Astrocyte of the cerebellum (primary cell): ENCODE measurements at regions of chr15 and their contacts with region 1.

Region 1: GRCh38 chr15:34099914-34100313 is 1.7 kb downstream of the EMC7 start:
- DNase-seq: no peak
- H3K4me3 ChIP-seq: no peak overlapping the region
- CTCF ChIP-seq: no peak

Region 2: DNA sequence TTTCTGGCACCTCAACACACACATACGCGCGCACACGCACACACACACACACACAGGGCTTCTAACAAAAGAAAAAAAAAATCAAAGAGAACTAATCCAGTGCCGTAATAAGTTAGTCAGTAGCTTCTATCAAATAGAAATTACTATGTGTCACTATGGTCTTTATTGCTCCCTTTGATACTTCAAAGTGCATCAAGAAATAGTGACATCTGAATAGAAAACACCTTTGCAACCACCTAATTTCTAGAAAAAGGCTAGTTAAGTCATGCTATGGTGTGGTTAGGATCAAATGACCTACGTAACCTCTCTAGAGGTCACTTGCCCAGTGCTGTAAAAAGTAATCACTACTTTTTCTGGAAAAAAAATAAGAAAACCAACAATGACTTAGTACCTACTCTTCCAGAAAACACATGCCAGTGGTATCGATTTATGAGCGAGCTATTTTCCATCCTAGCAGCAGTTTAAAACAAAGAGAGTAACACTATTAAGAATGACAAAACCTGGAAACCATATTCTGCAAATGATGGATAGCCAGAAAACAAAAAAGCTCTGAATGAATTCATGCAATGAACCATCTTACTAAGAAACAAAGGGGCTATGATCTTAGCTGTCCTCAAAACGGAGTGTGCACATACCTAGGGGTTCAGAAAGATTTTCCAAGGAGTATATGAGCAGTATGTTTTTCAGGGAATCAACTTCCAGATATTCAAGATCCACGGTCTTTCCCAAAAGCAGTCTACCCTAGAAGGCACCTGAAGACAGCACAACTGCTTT is 67.7 kb before region 1 on chr15:
- in situ Hi-C with region 1: no loop called
- DNase-seq: no peak
- H3K4me3 ChIP-seq: no peak overlapping the region
- CTCF ChIP-seq: no peak

Region 3: GRCh38 chr15:34203936-34204335 is 104.0 kb after region 1 on chr15:
- in situ Hi-C with region 1: loop called (anchors 5 kb)
- DNase-seq: no peak
- H3K4me3 ChIP-seq: no peak overlapping the region
- CTCF ChIP-seq: no peak